Astrocyte of the cerebellum (primary cell): ENCODE measurements at regions of chr4 and their contacts with region 1.

Region 1: DNA sequence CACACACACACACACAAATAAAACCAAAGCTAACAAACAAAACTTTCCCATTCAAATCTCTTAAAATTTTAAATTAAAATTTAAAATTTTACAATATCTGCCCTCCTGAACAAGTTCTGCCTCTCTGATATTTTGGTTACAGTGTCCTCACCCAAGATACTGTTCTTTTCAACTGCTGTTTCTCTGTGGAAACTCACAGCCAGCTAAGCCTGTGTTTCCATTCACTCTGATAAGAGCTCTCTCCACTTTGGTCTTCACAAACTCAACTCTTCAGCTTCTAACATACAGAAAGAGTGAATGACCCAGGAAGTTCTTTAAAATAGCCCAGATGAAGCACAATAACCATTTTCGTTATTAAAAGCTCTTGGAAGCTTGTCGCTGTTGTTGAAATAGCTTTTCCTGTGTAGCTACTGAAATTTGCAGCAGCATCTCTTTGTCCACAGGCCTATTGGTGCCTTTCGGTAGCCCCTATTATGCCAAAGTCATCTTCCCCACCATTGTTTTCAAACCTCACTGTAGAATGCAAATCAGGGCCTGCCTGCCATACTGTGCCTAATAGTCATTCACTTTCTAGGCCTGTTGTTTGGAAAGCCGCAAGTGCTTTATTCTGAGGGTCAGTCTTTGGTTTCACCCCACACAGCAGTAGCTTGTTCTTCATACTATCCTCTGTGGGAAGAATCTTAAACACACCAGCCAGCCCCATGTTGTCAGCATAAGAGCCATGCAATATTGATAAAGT is 19.4 kb downstream of the INPP4B start:
- DNase-seq: no peak
- H3K4me3 ChIP-seq: no peak overlapping the region
- CTCF ChIP-seq: no peak

Region 2: GRCh38 chr4:142778430-142778829 is 48.2 kb before region 1 on chr4:
- in situ Hi-C with region 1: loop called (anchors 5 kb)
- DNase-seq: peak; percentile 1
- H3K4me3 ChIP-seq: no peak overlapping the region
- CTCF ChIP-seq: no peak